Heart left ventricle (tissue), 16 donors: ENCODE measurements at regions of chr2 and their contacts with region 1.

Region 1: GRCh38 chr2:196468394-196468793 is 171.1 kb upstream of the CCDC150 start:
- DNase-seq: no peak
- ATAC-seq: no peak
- H3K4me3 ChIP-seq: no peak overlapping the region
- H3K27ac ChIP-seq: no peak overlapping the region
- H3K4me1 ChIP-seq: peaks cover 0 to 13% (median 0%) of the 10 kb centered on the region in 12 donors
- H3K27me3 ChIP-seq: no peaks in the 10 kb centered on the region
- CTCF ChIP-seq: peak in 2 of 12 donors; percentile 8 to 17
- POLR2A ChIP-seq: no peak

Region 2: DNA sequence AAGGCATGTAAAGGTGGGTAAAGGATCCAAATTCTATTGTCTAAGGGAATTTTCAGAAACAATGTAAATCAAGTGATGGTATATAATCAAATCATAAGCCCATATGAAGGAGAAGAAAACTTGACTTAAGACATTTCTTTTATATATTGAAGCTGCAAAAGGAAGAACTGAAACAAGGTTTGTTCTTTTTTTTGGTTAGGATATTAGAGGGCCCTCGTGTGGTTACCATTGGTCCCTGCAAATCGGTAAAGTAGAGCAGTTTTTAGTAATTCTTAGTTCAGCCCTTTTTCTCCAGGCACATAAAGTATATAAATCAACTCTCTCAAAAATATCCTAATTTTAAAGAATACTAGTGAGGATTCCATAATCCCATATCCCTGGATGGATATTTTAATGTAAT is 191.4 kb before region 1 on chr2:
- intact Hi-C with region 1: no loop called
- DNase-seq: no peak
- ATAC-seq: no peak
- H3K4me3 ChIP-seq: no peak overlapping the region
- H3K27ac ChIP-seq: no peak overlapping the region
- H3K4me1 ChIP-seq: peaks cover 0 to 40% (median 12%) of the 10 kb centered on the region in 12 donors
- H3K27me3 ChIP-seq: no peaks in the 10 kb centered on the region
- CTCF ChIP-seq: peak; percentile 30 to 62 (median 49)
- POLR2A ChIP-seq: no peak

Region 3: GRCh38 chr2:196314780-196315179 is 153.6 kb before region 1 on chr2:
- intact Hi-C with region 1: loop called in 1 of 10 experiments (anchors 10 kb)
- DNase-seq: peak in 4 of 5 donors; percentile 49 to 72 (median 60)
- ATAC-seq: peak; percentile 62 to 84 (median 78)
- H3K4me3 ChIP-seq: no peak overlapping the region
- H3K27ac ChIP-seq: peak overlapping the region in 2 of 12 donors; percentile 4 to 20
- H3K4me1 ChIP-seq: peaks cover 0 to 34% (median 4%) of the 10 kb centered on the region in 12 donors
- H3K27me3 ChIP-seq: no peaks in the 10 kb centered on the region
- CTCF ChIP-seq: peak in 1 of 12 donors; percentile 23
- POLR2A ChIP-seq: no peak

Region 4: GRCh38 chr2:196415384-196415783 is 53.0 kb before region 1 on chr2:
- intact Hi-C with region 1: no loop called
- DNase-seq: no peak
- ATAC-seq: no peak
- H3K4me3 ChIP-seq: no peak overlapping the region
- H3K27ac ChIP-seq: no peak overlapping the region
- H3K4me1 ChIP-seq: peaks cover 0 to 49% (median 23%) of the 10 kb centered on the region in 12 donors
- H3K27me3 ChIP-seq: no peaks in the 10 kb centered on the region
- CTCF ChIP-seq: no peak
- POLR2A ChIP-seq: no peak